CD4-positive, alpha-beta T cell (primary cell): ENCODE measurements at regions of chr6 and their contacts with region 1.

Region 1: GRCh38 chr6:15621203-15622044 is 41.4 kb downstream of the DTNBP1 start:
- DNase-seq: peak in 2 of 14 experiments; percentile 41 to 51
- ATAC-seq: no peak
- H3K4me3 ChIP-seq: no peak overlapping the region
- H3K4me3 Mint-ChIP-seq: no peak overlapping the region
- H3K27ac ChIP-seq: no peak overlapping the region
- H3K27ac Mint-ChIP-seq: no peak overlapping the region
- H3K4me1 ChIP-seq: peaks cover 4% of the 10 kb centered on the region
- H3K4me1 Mint-ChIP-seq: peaks cover 59% of the 10 kb centered on the region
- H3K27me3 ChIP-seq: no peaks in the 10 kb centered on the region
- H3K27me3 Mint-ChIP-seq: no peaks in the 10 kb centered on the region
- CTCF ChIP-seq: no peak

Region 2: DNA sequence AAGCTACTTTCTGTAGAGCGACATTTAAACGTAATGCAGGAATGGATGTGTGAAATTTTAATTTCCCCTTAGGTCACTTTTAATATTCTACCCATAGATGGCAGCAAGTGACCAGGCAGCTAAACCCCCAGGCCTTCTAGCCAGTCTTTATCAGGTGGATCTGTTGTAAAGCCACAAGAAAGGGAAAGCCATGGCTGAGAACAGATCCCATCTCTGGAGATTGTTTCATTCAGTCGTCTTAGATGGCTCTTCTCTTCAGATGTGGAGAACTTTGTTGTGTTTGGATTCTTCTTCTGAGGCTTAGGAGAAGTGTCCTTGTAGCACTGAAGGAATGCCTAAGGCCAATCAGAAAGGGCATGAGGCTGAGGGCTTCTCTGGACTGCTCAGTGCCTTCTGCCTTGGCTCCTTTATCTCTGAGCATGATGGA is 1712.5 kb before region 1 on chr6:
- CTCF ChIA-PET with region 1: no interaction called
- POLR2A ChIA-PET with region 1: no interaction called
- intact Hi-C with region 1: loop called in 1 of 2 experiments (anchors 5 kb)
- DNase-seq: peak in 13 of 14 experiments; percentile 5 to 82 (median 25)
- ATAC-seq: peak; percentile 59
- H3K4me3 ChIP-seq: no peak overlapping the region
- H3K4me3 Mint-ChIP-seq: no peak overlapping the region
- H3K27ac ChIP-seq: no peak overlapping the region
- H3K27ac Mint-ChIP-seq: no peak overlapping the region
- H3K4me1 ChIP-seq: peaks cover 3% of the 10 kb centered on the region
- H3K4me1 Mint-ChIP-seq: peaks cover 7% of the 10 kb centered on the region
- H3K27me3 ChIP-seq: peaks cover 5 to 13% of the 10 kb centered on the region in 2 experiments
- H3K27me3 Mint-ChIP-seq: peaks cover 50% of the 10 kb centered on the region
- CTCF ChIP-seq: peak; percentile 69

Region 3: DNA sequence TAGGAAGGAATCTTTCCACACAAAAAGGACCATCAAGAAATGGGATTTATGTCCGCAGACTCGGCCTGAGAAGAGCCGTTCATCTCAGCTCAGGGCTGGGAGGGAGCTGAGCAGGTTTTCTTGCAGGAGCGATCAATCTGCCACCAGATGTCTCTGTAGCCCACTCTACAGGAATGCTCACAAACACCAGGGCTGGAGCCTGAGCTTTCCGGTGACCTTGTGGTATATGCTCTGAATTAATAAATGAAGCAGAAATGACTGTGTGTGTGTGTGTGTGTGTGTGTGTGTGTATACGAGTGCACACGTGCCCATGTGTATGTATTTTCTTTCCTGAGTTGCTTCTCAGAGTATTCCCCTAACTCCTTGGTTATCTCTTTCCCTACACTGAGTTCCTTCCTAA is 1491.8 kb before region 1 on chr6:
- CTCF ChIA-PET with region 1: no interaction called
- POLR2A ChIA-PET with region 1: interaction called, 5 read pairs
- intact Hi-C with region 1: loop called (anchors 5 to 10 kb)
- DNase-seq: peak in 8 of 14 experiments; percentile 14 to 63 (median 30)
- ATAC-seq: peak; percentile 67
- H3K4me3 ChIP-seq: no peak overlapping the region
- H3K4me3 Mint-ChIP-seq: no peak overlapping the region
- H3K27ac ChIP-seq: no peak overlapping the region
- H3K27ac Mint-ChIP-seq: no peak overlapping the region
- H3K4me1 ChIP-seq: peaks cover 11% of the 10 kb centered on the region
- H3K4me1 Mint-ChIP-seq: peaks cover 7% of the 10 kb centered on the region
- H3K27me3 ChIP-seq: no peaks in the 10 kb centered on the region
- H3K27me3 Mint-ChIP-seq: no peaks in the 10 kb centered on the region
- CTCF ChIP-seq: peak; percentile 23

Region 4: GRCh38 chr6:15491255-15491985 is 130.0 kb before region 1 on chr6:
- CTCF ChIA-PET with region 1: no interaction called
- POLR2A ChIA-PET with region 1: no interaction called
- intact Hi-C with region 1: loop called in 1 of 2 experiments (anchors 1 kb)
- DNase-seq: peak; percentile 52 to 80 (median 62)
- ATAC-seq: peak; percentile 84
- H3K4me3 ChIP-seq: no peak overlapping the region
- H3K4me3 Mint-ChIP-seq: no peak overlapping the region
- H3K27ac ChIP-seq: no peak overlapping the region
- H3K27ac Mint-ChIP-seq: peak overlapping the region; percentile 28
- H3K4me1 ChIP-seq: peaks cover 7% of the 10 kb centered on the region
- H3K4me1 Mint-ChIP-seq: peaks cover 47% of the 10 kb centered on the region
- H3K27me3 ChIP-seq: no peaks in the 10 kb centered on the region
- H3K27me3 Mint-ChIP-seq: no peaks in the 10 kb centered on the region
- CTCF ChIP-seq: peak; percentile 85

Region 5: GRCh38 chr6:15512126-15512525 is 109.3 kb before region 1 on chr6:
- CTCF ChIA-PET with region 1: no interaction called
- POLR2A ChIA-PET with region 1: no interaction called
- intact Hi-C with region 1: loop called in 1 of 2 experiments (anchors 5 kb)
- DNase-seq: no peak
- ATAC-seq: no peak
- H3K4me3 ChIP-seq: no peak overlapping the region
- H3K4me3 Mint-ChIP-seq: no peak overlapping the region
- H3K27ac ChIP-seq: peak overlapping the region in 1 of 2 donors; percentile 4
- H3K27ac Mint-ChIP-seq: peak overlapping the region; percentile 30
- H3K4me1 ChIP-seq: no peaks in the 10 kb centered on the region
- H3K4me1 Mint-ChIP-seq: no peaks in the 10 kb centered on the region
- H3K27me3 ChIP-seq: no peaks in the 10 kb centered on the region
- H3K27me3 Mint-ChIP-seq: no peaks in the 10 kb centered on the region
- CTCF ChIP-seq: no peak